Posterior cingulate gyrus (tissue), 11 donors: ENCODE measurements at regions of chr7 and their contacts with region 1.

Region 1: GRCh38 chr7:72334066-72334465 is 78.1 kb downstream of the CALN1 start:
- DNase-seq: no peak

Region 2: DNA sequence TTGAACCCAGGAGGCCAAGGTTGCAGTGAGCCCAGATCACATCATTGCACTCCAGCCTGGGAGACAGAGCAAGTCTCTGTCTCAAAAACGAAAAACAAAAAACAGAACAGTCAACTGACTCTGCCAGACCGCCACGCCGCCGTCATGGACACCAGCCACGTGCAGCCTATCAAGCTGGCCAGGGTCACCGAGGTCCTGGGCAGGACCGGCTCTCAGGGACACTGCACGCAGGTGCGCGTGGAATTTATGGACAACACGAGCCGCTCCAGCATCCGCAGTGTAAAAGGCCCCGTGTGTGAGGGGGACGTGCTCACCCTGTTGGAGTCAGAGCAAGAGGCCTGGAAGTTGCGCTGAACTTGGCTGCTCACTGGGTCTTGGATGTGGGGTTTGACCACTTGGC is 392.0 kb before region 1 on chr7:
- intact Hi-C with region 1: no loop called
- DNase-seq: peak in 1 of 10 donors; percentile 83

Region 3: GRCh38 chr7:72152161-72153131 is 181.6 kb before region 1 on chr7:
- intact Hi-C with region 1: loop called (anchors 10 kb)
- DNase-seq: peak in 5 of 10 donors; percentile 17 to 62 (median 25)

Region 4: DNA sequence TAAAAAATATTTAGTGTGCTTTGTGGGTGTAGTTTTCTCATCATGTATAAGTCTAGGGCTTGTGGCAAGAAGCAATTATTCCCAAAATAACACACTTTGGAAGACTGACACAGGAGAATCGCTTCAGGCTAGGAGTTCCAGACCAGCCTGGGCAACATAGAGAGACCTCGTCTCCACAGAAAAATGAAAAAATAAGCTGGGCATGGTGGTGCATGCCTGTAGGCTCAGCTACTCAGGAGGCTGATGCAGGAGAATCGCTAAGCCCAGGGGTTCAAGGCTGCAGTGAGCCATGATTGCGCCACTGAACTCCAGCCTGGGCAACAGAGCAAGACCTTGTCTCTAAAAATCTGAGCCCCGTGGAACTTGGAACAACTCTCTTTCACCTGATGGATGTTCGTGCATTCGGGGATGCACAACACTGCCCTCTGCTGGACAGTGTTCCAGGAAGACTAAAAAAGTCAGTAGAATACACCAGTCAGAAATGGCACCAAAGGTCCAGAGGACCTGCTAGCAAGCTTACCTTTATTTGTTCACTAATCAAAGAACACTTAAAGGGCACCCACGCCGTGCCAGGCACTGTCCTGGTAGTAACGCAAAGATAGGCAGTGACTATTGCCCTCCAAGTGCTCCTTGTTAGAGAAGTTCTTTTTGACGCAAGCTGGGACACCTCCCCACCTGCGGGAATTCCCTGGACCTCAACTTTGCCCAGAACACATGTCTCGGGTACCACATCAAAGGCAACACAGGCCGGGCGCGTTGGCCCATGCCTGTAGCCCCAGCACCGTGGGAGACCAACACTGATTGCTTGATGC is 160.0 kb after region 1 on chr7:
- intact Hi-C with region 1: loop called (anchors 5 kb)
- DNase-seq: peak in 9 of 10 donors; percentile 37 to 93 (median 79)